Natural killer cell (primary cell): ENCODE measurements at regions of chr3 and their contacts with region 1.

Region 1: DNA sequence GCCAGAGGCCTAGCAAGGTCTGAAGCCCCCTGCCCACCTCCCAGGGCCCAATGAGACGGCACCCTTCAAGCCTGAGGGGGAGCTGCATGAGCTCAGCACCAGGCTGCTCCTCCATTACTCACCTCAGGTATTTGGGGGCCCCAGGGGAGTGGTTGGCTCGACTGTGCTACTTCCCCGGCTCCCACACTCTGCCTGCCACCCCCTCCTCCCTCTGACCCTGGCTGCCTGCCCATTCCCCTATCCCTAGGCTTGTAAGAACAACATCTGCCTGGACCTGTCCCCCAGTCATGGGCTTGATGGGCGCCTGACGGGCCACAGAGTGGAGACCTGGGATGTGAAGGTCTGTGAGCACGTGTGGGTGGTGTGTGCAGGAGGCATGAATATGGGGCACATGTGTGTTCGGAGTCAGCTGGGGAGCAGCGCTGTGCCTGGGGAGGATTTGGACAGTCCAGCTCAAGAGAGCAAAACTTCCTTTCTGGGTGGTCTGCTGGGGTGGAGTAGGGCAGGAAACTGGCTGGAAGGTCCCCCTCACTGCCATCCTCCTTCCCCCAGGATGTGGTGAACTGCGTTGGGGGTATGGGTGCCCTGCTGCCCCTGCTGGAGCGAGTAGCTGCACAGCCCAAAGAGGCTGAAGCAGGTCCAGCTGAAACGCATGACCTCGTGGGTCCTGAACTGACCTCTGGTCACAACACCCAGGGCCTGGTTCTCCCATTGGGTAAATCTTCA is 17.4 kb downstream of the NBEAL2 start:
- DNase-seq: no peak
- ATAC-seq: no peak
- H3K4me3 ChIP-seq: no peak overlapping the region
- H3K4me3 Mint-ChIP-seq: no peak overlapping the region
- H3K27ac ChIP-seq: no peak overlapping the region
- H3K27ac Mint-ChIP-seq: peak overlapping the region; percentile 64 to 72
- H3K4me1 ChIP-seq: peaks cover 41% of the 10 kb centered on the region
- H3K4me1 Mint-ChIP-seq: peaks cover 30 to 42% of the 10 kb centered on the region in 2 donors
- H3K27me3 ChIP-seq: no peaks in the 10 kb centered on the region
- H3K27me3 Mint-ChIP-seq: no peaks in the 10 kb centered on the region
- CTCF ChIP-seq: no peak

Region 2: DNA sequence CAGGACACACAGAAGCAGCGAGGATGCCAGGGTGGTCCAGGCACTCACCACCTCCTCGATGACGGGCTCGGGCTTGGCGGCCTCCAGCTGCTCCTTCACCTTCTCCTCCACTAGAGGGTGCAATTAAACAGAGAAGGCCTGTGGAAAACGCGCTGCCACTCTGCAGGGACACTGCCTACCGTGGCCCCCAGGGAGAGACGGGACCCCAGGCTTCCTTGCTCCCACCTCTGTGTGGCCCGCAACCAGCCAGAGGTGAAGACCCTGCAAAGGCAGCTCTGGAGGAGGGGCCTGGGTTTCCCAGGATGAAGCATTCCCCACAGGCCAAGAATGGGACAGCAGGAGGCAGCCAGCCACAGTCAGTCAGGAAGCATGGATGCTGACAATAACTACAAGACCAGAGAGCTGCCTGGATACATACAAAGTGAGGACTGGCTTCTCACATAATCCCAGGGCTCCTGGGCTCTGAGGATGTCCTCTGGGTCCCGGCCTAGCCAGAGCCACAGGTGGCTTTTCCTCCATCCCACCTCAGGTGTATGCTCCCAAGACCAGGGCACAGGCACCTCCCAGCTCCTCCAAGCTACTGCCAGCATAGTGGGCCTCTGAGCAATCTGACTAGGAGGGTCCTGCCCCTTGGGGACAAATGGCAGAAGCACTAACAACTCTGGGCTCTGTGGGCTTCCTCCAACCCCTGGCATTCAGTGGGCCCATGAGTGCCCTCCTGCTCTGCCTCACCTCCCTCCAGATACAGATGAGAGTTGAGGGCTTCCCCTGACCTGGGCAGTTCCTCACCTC is 73.1 kb before region 1 on chr3:
- intact Hi-C with region 1: loop called (anchors 1 kb)
- DNase-seq: peak; percentile 39 to 64
- ATAC-seq: peak; percentile 56 to 63 (median 57)
- H3K4me3 ChIP-seq: no peak overlapping the region
- H3K4me3 Mint-ChIP-seq: no peak overlapping the region
- H3K27ac ChIP-seq: no peak overlapping the region
- H3K27ac Mint-ChIP-seq: peak overlapping the region; percentile 56 to 79
- H3K4me1 ChIP-seq: peaks cover 55% of the 10 kb centered on the region
- H3K4me1 Mint-ChIP-seq: peaks cover 44 to 50% of the 10 kb centered on the region in 2 donors
- H3K27me3 ChIP-seq: no peaks in the 10 kb centered on the region
- H3K27me3 Mint-ChIP-seq: no peaks in the 10 kb centered on the region
- CTCF ChIP-seq: peak; percentile 66

Region 3: GRCh38 chr3:46947981-46948791 is 48.7 kb before region 1 on chr3:
- intact Hi-C with region 1: no loop called
- DNase-seq: peak; percentile 66 to 87
- ATAC-seq: peak; percentile 58 to 76 (median 66)
- H3K4me3 ChIP-seq: peak overlapping the region; percentile 17
- H3K4me3 Mint-ChIP-seq: peak overlapping the region; percentile 92
- H3K27ac ChIP-seq: peak overlapping the region; percentile 98
- H3K27ac Mint-ChIP-seq: peak overlapping the region; percentile 96 to 99
- H3K4me1 ChIP-seq: peaks cover 98% of the 10 kb centered on the region
- H3K4me1 Mint-ChIP-seq: peaks cover 90 to 92% of the 10 kb centered on the region in 2 donors
- H3K27me3 ChIP-seq: no peaks in the 10 kb centered on the region
- H3K27me3 Mint-ChIP-seq: no peaks in the 10 kb centered on the region
- CTCF ChIP-seq: no peak

Region 4: DNA sequence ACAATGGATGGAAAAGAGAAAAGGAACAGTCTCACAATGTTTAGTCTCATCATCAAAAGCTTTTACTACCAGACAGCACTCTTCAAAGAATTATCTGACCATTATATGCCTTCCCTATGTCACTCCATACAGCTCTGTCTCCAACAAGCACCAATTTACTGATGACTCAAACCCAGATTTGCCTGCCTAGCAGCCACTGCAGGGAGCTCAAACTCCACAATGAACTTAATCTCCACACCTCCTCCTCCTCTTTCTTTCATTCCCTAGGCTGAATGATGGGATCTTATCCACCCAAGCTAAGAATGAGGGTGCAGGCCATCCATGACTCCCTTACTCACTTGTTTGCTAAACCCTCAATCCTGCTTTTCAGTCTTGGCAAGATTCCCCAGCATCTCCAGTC is 28.1 kb after region 1 on chr3:
- intact Hi-C with region 1: no loop called
- DNase-seq: no peak
- ATAC-seq: no peak
- H3K4me3 ChIP-seq: no peak overlapping the region
- H3K4me3 Mint-ChIP-seq: no peak overlapping the region
- H3K27ac ChIP-seq: no peak overlapping the region
- H3K27ac Mint-ChIP-seq: no peak overlapping the region
- H3K4me1 ChIP-seq: no peaks in the 10 kb centered on the region
- H3K4me1 Mint-ChIP-seq: peaks cover 18 to 23% of the 10 kb centered on the region in 2 donors
- H3K27me3 ChIP-seq: no peaks in the 10 kb centered on the region
- H3K27me3 Mint-ChIP-seq: no peaks in the 10 kb centered on the region
- CTCF ChIP-seq: no peak

Region 5: DNA sequence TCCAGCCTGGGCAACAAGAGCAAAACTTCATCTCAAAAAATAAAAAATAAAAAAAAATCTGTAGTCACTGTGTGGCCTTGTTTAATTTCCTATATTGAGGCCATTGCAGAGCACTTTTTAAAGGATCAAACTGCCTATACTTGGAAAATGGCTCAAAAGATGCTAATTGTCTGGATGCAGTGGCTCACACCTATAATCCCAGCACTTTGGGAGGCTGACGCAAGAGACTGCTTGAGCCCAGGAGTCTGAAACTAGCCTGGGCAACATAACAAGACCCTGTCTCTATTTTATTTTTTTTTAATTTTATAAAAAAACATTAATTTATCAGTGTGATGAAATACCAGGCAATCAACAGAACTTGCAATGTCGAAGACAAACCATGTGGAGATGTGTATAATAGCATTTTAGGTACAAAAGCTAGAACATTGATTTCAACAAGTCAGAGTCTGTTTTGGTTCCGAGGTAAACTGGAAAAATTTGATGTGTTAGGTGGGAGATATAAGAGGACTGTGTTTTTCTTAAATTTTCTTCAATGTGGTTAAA is 214.1 kb after region 1 on chr3:
- intact Hi-C with region 1: no loop called
- DNase-seq: no peak
- ATAC-seq: no peak
- H3K4me3 ChIP-seq: no peak overlapping the region
- H3K4me3 Mint-ChIP-seq: no peak overlapping the region
- H3K27ac ChIP-seq: no peak overlapping the region
- H3K27ac Mint-ChIP-seq: no peak overlapping the region
- H3K4me1 ChIP-seq: no peaks in the 10 kb centered on the region
- H3K4me1 Mint-ChIP-seq: no peaks in the 10 kb centered on the region
- H3K27me3 ChIP-seq: no peaks in the 10 kb centered on the region
- H3K27me3 Mint-ChIP-seq: no peaks in the 10 kb centered on the region
- CTCF ChIP-seq: no peak